Psoas muscle (tissue), 8 donors: ENCODE measurements at regions of chr16 and their contacts with region 1.

Region 1: DNA sequence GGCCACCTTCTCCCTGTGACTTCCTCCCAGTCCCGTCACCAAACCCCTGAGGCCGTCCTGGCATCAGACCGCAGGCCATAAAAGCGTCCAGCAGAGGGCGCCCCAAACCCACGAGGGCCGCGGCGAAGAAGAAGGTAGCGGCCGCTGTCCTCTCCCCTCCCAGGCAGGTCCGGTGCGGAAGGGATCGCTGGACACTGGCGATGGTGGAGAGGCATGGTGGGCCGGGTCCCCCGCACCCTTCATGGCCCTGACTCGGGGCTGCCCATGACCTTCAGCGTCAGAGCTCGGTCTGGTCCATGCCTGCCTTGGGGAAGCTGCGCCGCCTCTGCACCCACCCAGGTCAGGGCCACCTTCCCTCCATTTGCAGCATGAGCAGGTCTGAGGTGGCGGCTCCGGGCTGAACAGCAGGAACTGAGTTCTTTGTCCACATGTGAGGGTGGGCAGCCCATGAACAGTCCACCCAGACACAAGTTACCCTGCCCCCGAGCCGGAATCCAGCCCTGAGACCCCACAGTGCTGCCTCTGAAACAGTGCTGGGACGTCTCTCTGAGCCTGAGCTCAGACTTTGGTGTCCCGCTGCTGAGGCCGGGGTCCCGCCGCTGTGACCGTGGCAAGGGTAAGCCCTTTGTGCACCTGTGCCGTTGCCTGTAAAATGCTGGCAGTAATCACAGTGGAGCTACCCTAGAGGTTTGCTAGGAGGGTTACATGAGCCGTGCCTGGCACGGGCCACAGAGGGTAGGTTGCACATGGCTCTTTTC is 40.8 kb upstream of the CMIP start:
- DNase-seq: peak; percentile 82 to 89
- ATAC-seq: peak; percentile 86 to 97 (median 92)
- H3K4me3 ChIP-seq: peak overlapping the region; percentile 50
- H3K27ac ChIP-seq: no peak overlapping the region
- H3K4me1 ChIP-seq: peaks cover 6% of the 10 kb centered on the region
- H3K27me3 ChIP-seq: peaks cover 0 to 17% (median 2%) of the 10 kb centered on the region in 3 donors
- CTCF ChIP-seq: peak; percentile 92

Region 2: DNA sequence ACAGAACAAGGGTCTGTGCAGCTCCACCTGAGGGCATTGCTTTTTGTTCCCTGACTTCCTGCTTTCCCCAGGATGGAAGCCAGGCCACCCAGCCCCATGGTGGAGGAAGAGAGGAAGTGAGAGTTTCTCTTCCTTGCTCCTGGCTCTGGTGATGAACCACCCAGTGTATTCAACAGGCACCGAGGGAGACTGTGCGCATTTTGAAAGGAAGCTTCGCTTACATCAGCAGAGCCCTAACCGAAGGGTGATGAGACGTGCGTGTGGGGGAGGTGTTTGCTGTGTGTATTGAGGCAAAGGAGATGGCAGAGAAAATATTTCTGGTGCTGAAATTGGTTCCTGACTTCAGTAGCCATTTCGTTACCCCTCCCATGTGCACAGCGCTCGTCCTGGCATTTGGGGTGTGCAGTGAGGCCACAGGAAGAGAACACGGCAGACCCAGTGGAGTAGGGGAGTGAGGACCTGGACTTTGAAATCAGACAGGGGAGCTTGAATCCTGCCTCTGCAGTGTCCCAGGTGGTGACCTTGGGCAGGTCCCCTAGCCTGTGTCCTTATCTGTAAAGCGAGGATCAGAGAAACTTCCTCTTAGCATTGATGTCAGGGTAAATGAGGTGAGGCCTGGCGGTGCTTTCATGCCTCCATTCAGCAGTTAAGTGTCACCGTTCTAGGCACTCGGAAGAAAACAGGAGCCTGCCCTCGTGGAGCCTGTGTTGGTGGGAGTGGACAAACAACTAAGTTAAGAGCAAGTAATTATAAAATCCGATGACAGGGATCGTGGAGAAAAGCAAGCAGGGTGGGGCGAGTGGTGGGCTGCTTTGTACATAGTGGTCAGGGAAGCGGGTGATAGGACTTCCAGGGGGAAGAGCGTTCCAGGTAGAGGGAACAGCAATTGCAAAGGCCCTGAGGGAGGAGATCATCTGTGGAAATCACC is 48.2 kb after region 1 on chr16:
- intact Hi-C with region 1: no loop called
- DNase-seq: peak in 1 of 2 donors; percentile 30
- ATAC-seq: no peak
- H3K4me3 ChIP-seq: no peak overlapping the region
- H3K27ac ChIP-seq: no peak overlapping the region
- H3K4me1 ChIP-seq: no peaks in the 10 kb centered on the region
- H3K27me3 ChIP-seq: peaks cover 0 to under 1% (median 0%) of the 10 kb centered on the region in 3 donors
- CTCF ChIP-seq: no peak

Region 3: DNA sequence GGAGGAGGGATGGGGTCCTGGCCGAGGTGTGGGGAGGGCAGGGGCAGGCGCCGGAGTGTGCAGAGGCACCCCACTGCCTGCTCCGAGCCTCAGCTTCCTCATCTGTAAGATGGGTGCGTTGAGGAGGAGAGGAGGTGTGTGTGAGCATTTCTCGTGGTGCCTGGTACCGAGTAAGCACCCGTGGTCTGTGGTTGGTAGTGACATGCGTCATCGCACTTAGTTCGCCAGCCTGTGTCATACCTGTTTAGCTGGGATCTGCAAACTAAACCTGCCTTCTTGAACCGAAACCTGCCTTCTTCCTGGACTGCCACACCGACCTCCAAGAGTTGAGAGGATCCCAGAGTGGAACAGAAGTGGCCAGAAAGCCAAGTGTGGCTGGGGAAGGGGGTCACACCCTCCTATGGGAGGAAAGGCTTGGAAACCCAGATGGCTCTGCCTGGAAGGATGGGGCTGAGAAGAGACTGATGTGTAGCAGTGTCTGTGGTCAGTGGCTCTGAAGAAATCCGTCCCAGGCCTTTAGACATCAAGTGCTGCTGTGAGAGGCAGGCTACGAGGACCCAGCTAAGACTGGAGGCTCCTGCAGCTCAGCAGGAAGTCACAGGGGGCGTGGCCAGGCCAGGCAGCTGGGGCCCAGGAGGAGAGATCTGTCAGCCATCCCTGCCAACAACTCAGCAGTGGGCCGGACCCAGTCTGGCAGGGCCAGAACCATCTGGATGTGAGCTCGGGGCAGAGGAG is 212.7 kb after region 1 on chr16:
- intact Hi-C with region 1: loop called in 1 of 2 experiments (anchors 10 kb)
- DNase-seq: peak; percentile 72 to 82
- ATAC-seq: peak in 2 of 4 donors; percentile 50 to 56
- H3K4me3 ChIP-seq: no peak overlapping the region
- H3K27ac ChIP-seq: no peak overlapping the region
- H3K4me1 ChIP-seq: peaks cover 11% of the 10 kb centered on the region
- H3K27me3 ChIP-seq: peaks cover 0 to 9% (median 0%) of the 10 kb centered on the region in 3 donors
- CTCF ChIP-seq: no peak

Region 4: GRCh38 chr16:81696961-81697615 is 293.3 kb after region 1 on chr16:
- intact Hi-C with region 1: loop called in 1 of 2 experiments (anchors 2 kb)
- DNase-seq: peak in 1 of 2 donors; percentile 38
- ATAC-seq: peak in 3 of 4 donors; percentile 43 to 63 (median 53)
- H3K4me3 ChIP-seq: no peak overlapping the region
- H3K27ac ChIP-seq: no peak overlapping the region
- H3K4me1 ChIP-seq: no peaks in the 10 kb centered on the region
- H3K27me3 ChIP-seq: no peaks in the 10 kb centered on the region
- CTCF ChIP-seq: peak; percentile 49